Aorta (tissue), 5 donors: ENCODE measurements at regions of chr4 and their contacts with region 1.

Region 1: DNA sequence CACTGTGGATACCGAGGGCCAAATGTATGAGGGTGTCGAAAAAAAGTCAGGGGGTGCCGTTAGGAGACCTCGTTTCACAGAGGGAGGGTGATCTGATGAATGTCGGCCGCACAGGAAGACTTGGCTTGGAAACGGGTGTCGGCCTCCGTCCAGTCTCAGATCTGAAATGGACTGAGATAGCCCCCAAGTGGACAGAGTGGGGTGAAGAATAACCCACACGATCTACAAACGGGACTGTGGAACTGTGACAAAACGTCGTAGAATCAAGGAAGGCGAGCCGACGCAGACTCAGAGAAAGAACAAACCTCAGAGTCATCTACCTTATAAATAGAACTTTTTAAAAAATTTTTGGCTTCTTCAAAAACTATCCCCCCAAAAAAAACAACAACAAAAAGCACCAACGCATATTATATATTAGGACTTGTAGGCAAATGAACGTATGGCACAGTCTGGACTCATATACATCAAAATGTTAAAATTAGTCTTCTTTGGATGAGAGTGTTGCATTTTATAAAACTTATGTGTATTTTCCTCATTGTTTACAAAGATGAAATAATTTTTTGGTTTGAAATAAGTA is 63.8 kb upstream of the IRF2 start:
- DNase-seq: peak; percentile 92 to 93
- ATAC-seq: peak; percentile 94
- H3K4me3 ChIP-seq: peak overlapping the region; percentile 43 to 64
- H3K27ac ChIP-seq: peak overlapping the region; percentile 20 to 35
- H3K4me1 ChIP-seq: peaks cover 0 to 4% of the 10 kb centered on the region in 2 donors
- H3K27me3 ChIP-seq: no peaks in the 10 kb centered on the region

Region 2: DNA sequence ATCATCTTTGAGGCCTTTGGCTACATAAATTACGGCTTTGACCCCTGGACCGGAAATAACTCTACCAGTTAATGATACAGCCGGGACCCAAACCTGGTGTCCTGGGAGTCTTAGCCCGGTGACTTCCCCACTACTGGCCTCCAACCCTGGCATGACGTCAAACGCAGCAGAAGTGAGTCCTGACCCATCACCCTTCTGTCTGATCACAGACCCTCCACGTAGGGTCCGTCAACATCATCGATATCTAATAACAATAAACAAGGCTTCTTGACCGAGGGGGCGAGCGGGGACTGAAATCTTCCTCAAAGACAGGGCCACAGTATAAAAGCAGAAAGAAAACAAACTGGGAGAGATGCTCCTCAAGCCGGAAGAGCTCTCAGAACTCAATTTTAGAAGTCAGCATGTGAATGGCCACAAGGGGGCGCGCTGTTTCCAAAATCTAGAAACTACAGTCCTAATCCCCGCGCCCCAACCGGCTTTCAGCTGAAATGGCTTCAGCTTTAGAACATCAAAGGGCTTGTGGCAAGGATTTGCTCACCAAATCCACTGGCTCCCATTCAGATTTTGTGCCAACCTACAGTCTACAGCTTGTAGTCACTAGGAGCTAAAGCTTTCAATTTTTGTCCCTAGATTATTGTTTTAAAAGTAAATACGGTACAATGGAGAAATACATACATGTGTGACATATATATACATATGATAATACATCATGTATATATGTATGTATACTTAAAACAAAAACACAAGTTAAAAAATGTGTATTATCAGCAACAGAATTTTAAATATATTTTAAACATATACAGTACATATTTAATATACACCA is 274.0 kb before region 1 on chr4:
- intact Hi-C with region 1: loop called (anchors 2 kb)
- DNase-seq: peak; percentile 96 to 98
- ATAC-seq: peak; percentile 89
- H3K4me3 ChIP-seq: no peak overlapping the region
- H3K27ac ChIP-seq: no peak overlapping the region
- H3K4me1 ChIP-seq: no peaks in the 10 kb centered on the region
- H3K27me3 ChIP-seq: no peaks in the 10 kb centered on the region

Region 3: GRCh38 chr4:184287697-184288255 is 250.3 kb before region 1 on chr4:
- intact Hi-C with region 1: loop called (anchors 2 to 5 kb)
- DNase-seq: no peak
- ATAC-seq: peak; percentile 85
- H3K4me3 ChIP-seq: no peak overlapping the region
- H3K27ac ChIP-seq: no peak overlapping the region
- H3K4me1 ChIP-seq: no peaks in the 10 kb centered on the region
- H3K27me3 ChIP-seq: no peaks in the 10 kb centered on the region

Region 4: DNA sequence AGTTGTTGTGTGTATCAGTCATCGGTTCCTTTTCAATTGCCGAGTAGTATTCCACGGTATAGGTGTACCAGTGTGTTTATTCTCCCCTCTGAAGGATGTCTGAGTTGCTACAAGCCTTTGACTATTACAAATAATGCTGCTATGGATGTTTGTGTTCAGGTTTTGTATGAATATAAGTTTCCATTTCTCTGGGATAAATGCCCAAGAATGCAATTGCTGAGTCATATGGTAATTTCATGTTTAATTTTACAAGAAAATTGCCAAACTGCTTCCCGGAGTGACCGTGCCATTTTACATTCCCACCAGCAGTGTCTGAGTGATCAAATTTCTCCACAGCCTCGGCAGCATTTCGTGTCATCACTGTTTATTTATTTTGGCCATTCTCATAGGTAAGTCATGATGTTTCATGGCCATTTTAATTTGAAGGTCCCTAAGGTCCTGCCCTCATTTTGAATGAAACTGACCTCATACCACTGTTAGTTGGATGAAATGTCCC is 137.7 kb before region 1 on chr4:
- intact Hi-C with region 1: loop called (anchors 2 to 10 kb)
- DNase-seq: peak in 1 of 2 donors; percentile 71
- ATAC-seq: peak; percentile 75
- H3K4me3 ChIP-seq: no peak overlapping the region
- H3K27ac ChIP-seq: no peak overlapping the region
- H3K4me1 ChIP-seq: peaks cover 0 to 8% of the 10 kb centered on the region in 2 donors
- H3K27me3 ChIP-seq: no peaks in the 10 kb centered on the region

Region 5: DNA sequence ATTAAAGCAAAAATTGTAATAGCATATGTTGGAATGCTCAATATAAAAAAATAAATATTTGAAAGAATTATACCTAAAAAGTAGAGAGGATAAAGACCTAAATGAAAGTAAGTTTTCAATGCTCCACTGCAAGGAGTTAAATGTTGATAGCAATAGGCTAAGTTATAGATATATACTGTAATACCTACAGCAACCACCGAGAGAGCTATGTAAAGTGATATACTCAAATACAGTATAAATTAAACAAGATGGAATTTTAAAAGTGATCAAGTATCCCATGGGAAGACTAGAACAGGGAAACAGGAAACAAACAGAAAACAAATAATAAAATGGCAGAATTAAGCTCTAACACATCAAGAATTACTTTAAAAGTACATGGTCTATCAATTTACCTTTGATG is 37.2 kb after region 1 on chr4:
- intact Hi-C with region 1: no loop called
- DNase-seq: no peak
- ATAC-seq: no peak
- H3K4me3 ChIP-seq: no peak overlapping the region
- H3K27ac ChIP-seq: no peak overlapping the region
- H3K4me1 ChIP-seq: no peaks in the 10 kb centered on the region
- H3K27me3 ChIP-seq: no peaks in the 10 kb centered on the region

Region 6: GRCh38 chr4:184599492-184600135 is 61.5 kb after region 1 on chr4:
- intact Hi-C with region 1: no loop called
- DNase-seq: no peak
- ATAC-seq: no peak
- H3K4me3 ChIP-seq: no peak overlapping the region
- H3K27ac ChIP-seq: no peak overlapping the region
- H3K4me1 ChIP-seq: no peaks in the 10 kb centered on the region
- H3K27me3 ChIP-seq: peaks cover 0 to 2% of the 10 kb centered on the region in 2 donors

Region 7: GRCh38 chr4:184649026-184649970 is 111.2 kb after region 1 on chr4 and contains the starts of genes CASP3 and PRIMPOL:
- intact Hi-C with region 1: loop called (anchors 5 to 10 kb)
- DNase-seq: peak; percentile 98 to 99
- ATAC-seq: peak; percentile 98
- H3K4me3 ChIP-seq: peak within 1 kb of the TSS; percentile 77 to 93
- H3K27ac ChIP-seq: peak within 1 kb of the TSS; percentile 95 to 97
- H3K4me1 ChIP-seq: peaks cover 0 to 4% of the 10 kb centered on the region in 2 donors
- H3K27me3 ChIP-seq: no peaks in the 10 kb centered on the region
- total RNA-seq, gene CASP3: 19.3 to 23.2 TPM
- total RNA-seq, gene PRIMPOL: 16.0 to 23.8 TPM